Sciatic nerve (tissue), 2 donors: ENCODE measurements at regions of chr2 and their contacts with region 1.

Region 1: DNA sequence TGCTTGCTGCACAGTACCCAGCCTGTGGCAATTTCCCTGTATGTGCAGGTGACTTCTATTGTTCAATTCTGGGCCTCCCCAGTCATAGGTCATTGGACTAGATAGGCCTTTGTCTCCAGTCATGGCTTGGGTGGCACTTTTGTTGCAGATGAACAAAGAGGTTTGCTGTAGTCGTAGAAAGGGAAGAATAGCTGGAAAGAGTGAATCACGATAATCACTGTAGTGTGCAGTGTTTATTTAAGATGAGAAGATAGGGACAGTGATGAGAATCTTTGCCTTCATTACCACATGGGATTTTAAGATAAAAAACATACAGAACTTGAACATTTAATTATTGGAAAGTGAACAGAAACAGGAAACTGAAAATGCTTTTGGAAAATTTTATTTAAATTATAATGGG is 156.1 kb upstream of the CYRIA start:
- DNase-seq: no peak
- ATAC-seq: no peak

Region 2: GRCh38 chr2:16899958-16900357 is 78.3 kb after region 1 on chr2:
- intact Hi-C with region 1: loop called (anchors 5 kb)
- DNase-seq: no peak
- ATAC-seq: no peak

Region 3: DNA sequence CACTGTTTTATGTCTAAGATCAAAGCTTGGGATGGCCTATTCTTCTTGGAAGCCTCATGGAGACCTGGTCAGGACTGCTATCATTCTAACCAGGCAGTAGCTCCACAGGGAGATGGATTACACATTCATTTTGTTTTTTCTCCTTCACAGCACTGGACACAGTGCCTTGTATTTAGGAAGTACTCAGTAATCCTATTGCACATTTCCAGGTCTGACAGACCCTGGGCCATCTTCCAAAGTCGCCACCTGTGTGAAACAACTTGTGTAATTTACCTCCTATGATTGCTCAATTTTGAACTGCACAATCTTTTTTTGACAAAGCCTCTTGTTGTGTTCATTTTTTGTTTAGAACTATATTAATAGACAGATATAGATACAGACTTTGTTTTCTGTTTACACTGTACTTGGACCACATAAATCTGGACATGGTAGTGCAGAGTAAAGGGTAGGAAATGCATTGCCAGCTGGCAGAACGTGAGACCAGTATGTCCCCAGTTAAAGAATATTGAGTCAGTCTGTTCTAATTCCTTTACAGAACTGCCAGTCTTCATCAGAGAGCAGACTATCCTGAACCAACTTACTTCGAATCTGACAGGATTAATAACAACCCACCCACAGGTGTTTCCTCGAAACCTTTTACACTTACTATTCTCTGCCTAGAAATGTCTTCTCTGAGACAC is 121.7 kb after region 1 on chr2:
- intact Hi-C with region 1: no loop called
- DNase-seq: no peak
- ATAC-seq: no peak